IMR-90 (cell line): ENCODE measurements at regions of chr9 and their contacts with region 1.

Region 1: DNA sequence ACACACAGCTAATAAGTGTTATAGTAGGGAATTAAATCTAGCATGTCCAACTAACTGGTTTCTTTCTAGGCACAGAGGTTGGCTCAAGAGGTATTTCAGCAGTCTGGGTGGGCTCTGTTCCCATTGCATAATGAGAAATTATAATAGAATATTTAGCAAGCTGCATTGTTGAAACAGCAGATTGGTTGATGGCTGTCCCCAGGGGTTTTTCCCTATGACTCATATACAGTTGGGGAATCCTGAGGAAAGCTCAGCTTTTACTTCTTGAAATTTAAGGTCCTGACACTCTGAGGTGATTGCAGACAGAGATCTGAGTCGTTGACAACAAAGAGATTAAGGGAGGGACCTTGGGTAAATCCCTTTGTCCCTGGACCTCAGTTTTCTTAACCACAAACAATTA is 38.3 kb upstream of the TNFSF8 start:
- DNase-seq: peak; percentile 17
- ATAC-seq: peak; percentile 35; the same call in 1 of the 2 replicates
- H3K4me3 ChIP-seq: no peak overlapping the region
- H3K27ac ChIP-seq: no peak overlapping the region
- H3K4me1 ChIP-seq: no peaks in the 10 kb centered on the region
- H3K27me3 ChIP-seq: peaks cover 12% of the 10 kb centered on the region
- CTCF ChIP-seq: no peak
- POLR2A ChIP-seq: no peak
- RAD21 ChIP-seq: no peak

Region 2: GRCh38 chr9:114953917-114954316 is 14.8 kb before region 1 on chr9:
- CTCF ChIA-PET with region 1: interaction called, 3 read pairs
- POLR2A ChIA-PET with region 1: interaction called, 4 read pairs
- dilution Hi-C with region 1: no loop called
- in situ Hi-C with region 1: no loop called
- intact Hi-C with region 1: loop called (anchors 1 kb)
- DNase-seq: peak; percentile 84
- ATAC-seq: peak; percentile 85
- H3K4me3 ChIP-seq: no peak overlapping the region
- H3K27ac ChIP-seq: peak overlapping the region; percentile 41; the same call in 1 of the 2 replicates
- H3K4me1 ChIP-seq: peaks cover 7% of the 10 kb centered on the region
- H3K27me3 ChIP-seq: peaks cover 8% of the 10 kb centered on the region; the same call in 1 of the 2 replicates
- CTCF ChIP-seq: no peak
- POLR2A ChIP-seq: no peak
- RAD21 ChIP-seq: no peak